GM12878 (cell line): ENCODE measurements at regions of chr6 and their contacts with region 1.

Region 1: DNA sequence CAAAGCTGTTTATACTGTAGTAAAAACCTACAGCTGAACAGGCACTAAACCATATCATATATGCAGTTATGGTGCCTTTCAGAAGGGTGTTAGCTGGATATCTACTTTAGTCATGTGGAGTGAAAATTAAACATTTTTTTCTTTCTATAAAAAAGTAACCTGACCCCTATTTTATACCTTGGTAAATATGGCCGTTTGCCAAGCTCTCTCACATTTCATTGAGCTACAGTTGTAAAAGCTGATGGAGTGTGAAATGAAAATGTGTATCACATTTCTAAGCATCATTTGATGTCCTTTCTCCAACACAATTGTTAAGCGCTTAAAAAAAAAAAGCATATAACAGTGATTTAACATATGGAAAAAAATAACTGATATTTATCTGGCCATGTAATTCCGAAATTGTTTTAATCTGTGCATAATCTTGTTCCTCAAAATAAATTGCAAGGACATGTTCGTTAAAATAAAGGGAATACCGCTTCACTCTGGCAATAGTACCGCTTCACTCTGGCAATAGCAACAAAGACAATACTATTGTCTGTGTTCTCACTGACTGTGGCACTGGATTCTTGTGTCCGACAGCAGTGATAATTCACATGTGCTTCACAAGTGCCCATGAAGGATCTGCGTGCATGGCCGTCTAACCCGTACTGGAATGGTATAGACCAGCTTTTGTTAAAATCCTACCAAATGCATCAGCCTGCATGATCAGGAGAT is 391.8 kb upstream of the SOX4 start:
- DNase-seq: no peak
- ATAC-seq: no peak
- H3K4me3 ChIP-seq: no peak overlapping the region
- H3K27ac ChIP-seq: no peak overlapping the region
- H3K4me1 ChIP-seq: peaks cover 25% of the 10 kb centered on the region
- H3K27me3 ChIP-seq: no peaks in the 10 kb centered on the region
- CTCF ChIP-seq: no peak
- EP300 ChIP-seq: no peak
- POLR2A ChIP-seq: no peak
- RAD21 ChIP-seq: no peak

Region 2: GRCh38 chr6:21164768-21165326 is 36.9 kb before region 1 on chr6:
- CTCF ChIA-PET with region 1: no interaction called
- POLR2A ChIA-PET with region 1: interaction called, 3 read pairs
- RAD21 ChIA-PET with region 1: interaction called, 5 read pairs
- SMC1A ChIA-PET with region 1: interaction called, 12 read pairs
- in situ Hi-C with region 1: no loop called
- intact Hi-C with region 1: no loop called
- DNase-seq: no peak
- ATAC-seq: peak; percentile 78
- H3K4me3 ChIP-seq: no peak overlapping the region
- H3K27ac ChIP-seq: no peak overlapping the region
- H3K4me1 ChIP-seq: peaks cover 8% of the 10 kb centered on the region
- H3K27me3 ChIP-seq: no peaks in the 10 kb centered on the region
- CTCF ChIP-seq: no peak
- EP300 ChIP-seq: peak in 1 of 2 experiments; percentile 38; a peak in 1 of 4 replicates
- POLR2A ChIP-seq: no peak
- RAD21 ChIP-seq: no peak

Region 3: DNA sequence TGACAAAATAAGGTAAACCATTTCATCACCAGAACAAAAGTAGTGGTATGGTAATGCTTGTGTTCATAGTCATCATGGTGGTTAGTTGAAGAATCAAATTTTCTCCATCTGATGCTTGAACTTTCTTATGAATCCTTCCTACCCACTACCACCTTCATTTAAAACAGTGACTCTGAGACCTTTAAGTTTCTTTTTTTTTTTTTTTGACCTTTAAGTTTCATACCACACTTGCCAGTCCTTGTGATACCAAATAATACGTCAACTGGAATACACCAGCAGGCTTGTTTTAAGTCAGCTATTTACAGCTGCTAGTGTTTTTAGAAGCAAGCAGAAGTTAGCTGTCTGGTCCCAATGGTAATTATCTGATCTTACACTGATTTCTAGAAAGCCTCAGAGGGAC is 21.6 kb before region 1 on chr6:
- CTCF ChIA-PET with region 1: interaction called, 4 read pairs
- POLR2A ChIA-PET with region 1: interaction called, 5 read pairs
- RAD21 ChIA-PET with region 1: interaction called, 4 read pairs
- SMC1A ChIA-PET with region 1: interaction called, 10 read pairs
- in situ Hi-C with region 1: no loop called
- intact Hi-C with region 1: no loop called
- DNase-seq: peak; percentile 59
- ATAC-seq: peak; percentile 86
- H3K4me3 ChIP-seq: no peak overlapping the region
- H3K27ac ChIP-seq: peak overlapping the region; percentile 38; the same call in 1 of the 2 replicates
- H3K4me1 ChIP-seq: peaks cover 20% of the 10 kb centered on the region
- H3K27me3 ChIP-seq: no peaks in the 10 kb centered on the region
- CTCF ChIP-seq: no peak
- EP300 ChIP-seq: peak; percentile 79 to 93; a peak in 3 of 4 replicates
- POLR2A ChIP-seq: no peak
- RAD21 ChIP-seq: no peak

Region 4: GRCh38 chr6:21188505-21189223 is 13.1 kb before region 1 on chr6:
- CTCF ChIA-PET with region 1: interaction called, 4 read pairs
- POLR2A ChIA-PET with region 1: interaction called, 12 read pairs
- RAD21 ChIA-PET with region 1: interaction called, 21 read pairs
- SMC1A ChIA-PET with region 1: interaction called, 40 read pairs
- in situ Hi-C with region 1: no loop called
- intact Hi-C with region 1: no loop called
- DNase-seq: peak; percentile 82
- ATAC-seq: peak; percentile 77
- H3K4me3 ChIP-seq: no peak overlapping the region
- H3K27ac ChIP-seq: peak overlapping the region; percentile 77
- H3K4me1 ChIP-seq: peaks cover 19% of the 10 kb centered on the region
- H3K27me3 ChIP-seq: no peaks in the 10 kb centered on the region
- CTCF ChIP-seq: no peak
- EP300 ChIP-seq: no peak
- POLR2A ChIP-seq: no peak
- RAD21 ChIP-seq: no peak

Region 5: DNA sequence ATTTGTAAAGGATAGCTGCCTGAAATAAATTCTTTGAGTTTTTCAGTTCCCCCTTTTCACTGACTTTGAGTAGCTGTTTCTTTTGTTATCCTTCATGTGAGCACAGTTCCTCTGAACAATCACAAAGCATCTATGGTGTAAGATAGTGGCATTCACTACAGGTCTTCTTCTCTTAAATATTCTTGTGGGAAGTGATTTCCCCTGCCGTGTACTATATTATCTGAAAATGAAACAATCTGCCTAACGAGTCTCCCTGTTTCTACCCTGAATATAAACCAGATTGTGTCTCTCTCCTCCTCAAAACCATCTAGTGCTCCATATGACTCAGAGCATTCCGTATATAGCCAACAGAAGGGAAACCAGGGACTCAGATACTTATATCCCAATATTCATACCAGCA is 11.7 kb after region 1 on chr6:
- CTCF ChIA-PET with region 1: interaction called, 8 read pairs
- POLR2A ChIA-PET with region 1: interaction called, 8 read pairs
- RAD21 ChIA-PET with region 1: interaction called, 8 read pairs
- SMC1A ChIA-PET with region 1: interaction called, 34 read pairs
- in situ Hi-C with region 1: no loop called
- intact Hi-C with region 1: no loop called
- DNase-seq: peak; percentile 84
- ATAC-seq: peak; percentile 77
- H3K4me3 ChIP-seq: 0 out of 2 replicates have a peak overlapping the region, but pooled peaks have one; percentile 47
- H3K27ac ChIP-seq: peak overlapping the region; percentile 74
- H3K4me1 ChIP-seq: peaks cover 42% of the 10 kb centered on the region
- H3K27me3 ChIP-seq: no peaks in the 10 kb centered on the region
- CTCF ChIP-seq: no peak
- EP300 ChIP-seq: peak; percentile 67 to 69; a peak in 2 of 4 replicates
- POLR2A ChIP-seq: no peak
- RAD21 ChIP-seq: no peak

Region 6: DNA sequence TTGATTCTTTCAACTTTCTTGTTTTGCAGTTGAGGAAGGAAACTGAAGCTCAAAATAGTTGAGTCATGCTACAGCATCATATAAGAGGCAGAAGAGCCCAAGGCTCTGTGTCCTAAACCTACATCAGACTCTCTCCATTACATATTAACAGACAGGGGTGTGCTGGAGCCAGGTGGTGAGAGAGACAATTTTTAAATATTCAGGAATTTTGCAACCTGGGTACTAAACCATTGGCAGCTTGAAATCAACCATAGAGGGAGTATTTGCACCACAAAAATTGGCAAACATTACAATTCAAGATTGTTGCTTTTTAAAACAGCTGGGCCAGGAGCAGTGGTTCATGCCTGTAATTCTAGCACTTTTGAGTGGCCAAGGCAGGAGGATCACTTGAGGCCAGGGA is 325.9 kb after region 1 on chr6:
- CTCF ChIA-PET with region 1: no interaction called
- POLR2A ChIA-PET with region 1: no interaction called
- RAD21 ChIA-PET with region 1: no interaction called
- SMC1A ChIA-PET with region 1: no interaction called
- in situ Hi-C with region 1: no loop called
- intact Hi-C with region 1: no loop called
- DNase-seq: no peak
- ATAC-seq: no peak
- H3K4me3 ChIP-seq: no peak overlapping the region
- H3K27ac ChIP-seq: no peak overlapping the region
- H3K4me1 ChIP-seq: no peaks in the 10 kb centered on the region
- H3K27me3 ChIP-seq: no peaks in the 10 kb centered on the region
- CTCF ChIP-seq: peak in 1 of 3 experiments; percentile 13; a peak in 1 of 6 replicates
- EP300 ChIP-seq: no peak
- POLR2A ChIP-seq: no peak
- RAD21 ChIP-seq: no peak